GM12878 (cell line): ENCODE measurements at regions of chr6 and their contacts with region 1.

Region 1: DNA sequence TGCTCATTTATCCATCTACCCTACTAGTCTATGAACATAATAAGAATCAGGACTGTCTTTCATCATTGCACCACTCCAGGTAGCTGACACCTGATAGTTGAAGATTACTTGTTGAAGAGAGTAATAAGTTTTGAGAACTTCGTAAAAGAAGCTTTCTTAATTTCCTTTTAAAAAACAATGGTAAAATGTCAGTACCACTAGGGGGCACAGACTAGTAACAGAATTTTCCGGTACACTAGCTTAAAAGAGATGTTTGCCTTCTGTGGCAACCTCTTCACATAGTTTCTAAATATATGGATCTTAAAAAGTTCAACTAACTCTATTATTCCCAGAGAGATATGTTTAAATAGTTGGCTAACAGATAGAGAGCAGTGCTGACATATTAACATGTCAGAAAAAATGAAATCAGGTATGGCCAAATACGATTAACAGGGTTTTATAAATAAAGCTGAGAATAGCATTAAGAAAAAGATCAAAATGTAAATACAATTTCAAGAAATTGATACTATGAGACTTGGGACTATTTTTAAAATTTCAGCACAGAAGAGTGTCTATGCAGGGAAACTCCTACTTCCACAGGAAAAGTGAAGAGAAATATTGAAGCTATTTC is 5.4 kb upstream of the KCNQ5 start:
- DNase-seq: no peak
- ATAC-seq: no peak
- H3K4me3 ChIP-seq: no peak overlapping the region
- H3K27ac ChIP-seq: no peak overlapping the region
- H3K4me1 ChIP-seq: peaks cover 13% of the 10 kb centered on the region
- H3K27me3 ChIP-seq: no peaks in the 10 kb centered on the region
- CTCF ChIP-seq: peak; percentile 57 to 70 (median 60); a peak in 5 of 6 replicates
- EP300 ChIP-seq: no peak
- POLR2A ChIP-seq: no peak
- RAD21 ChIP-seq: peak; percentile 81

Region 2: GRCh38 chr6:72064399-72064975 is 552.0 kb before region 1 on chr6:
- CTCF ChIA-PET with region 1: no interaction called
- POLR2A ChIA-PET with region 1: no interaction called
- RAD21 ChIA-PET with region 1: no interaction called
- SMC1A ChIA-PET with region 1: no interaction called
- in situ Hi-C with region 1: no loop called
- intact Hi-C with region 1: no loop called
- DNase-seq: no peak
- ATAC-seq: no peak
- H3K4me3 ChIP-seq: no peak overlapping the region
- H3K27ac ChIP-seq: no peak overlapping the region
- H3K4me1 ChIP-seq: no peaks in the 10 kb centered on the region
- H3K27me3 ChIP-seq: 0 out of 4 replicates have a peak, but pooled peaks cover 0 to 2% of the 10 kb centered on the region in 2 experiments
- CTCF ChIP-seq: no peak
- EP300 ChIP-seq: no peak
- POLR2A ChIP-seq: no peak
- RAD21 ChIP-seq: no peak

Region 3: GRCh38 chr6:72418495-72418894 is 198.0 kb before region 1 on chr6:
- CTCF ChIA-PET with region 1: interaction called, 55 read pairs
- POLR2A ChIA-PET with region 1: no interaction called
- RAD21 ChIA-PET with region 1: interaction called, 6 read pairs
- SMC1A ChIA-PET with region 1: interaction called, 27 read pairs
- in situ Hi-C with region 1: no loop called
- intact Hi-C with region 1: loop called (anchors 2 kb)
- DNase-seq: no peak
- ATAC-seq: no peak
- H3K4me3 ChIP-seq: no peak overlapping the region
- H3K27ac ChIP-seq: no peak overlapping the region
- H3K4me1 ChIP-seq: no peaks in the 10 kb centered on the region
- H3K27me3 ChIP-seq: peaks cover 0 to 1% of the 10 kb centered on the region in 2 experiments; a peak in 1 of 4 replicates
- CTCF ChIP-seq: no peak
- EP300 ChIP-seq: no peak
- POLR2A ChIP-seq: no peak
- RAD21 ChIP-seq: no peak

Region 4: DNA sequence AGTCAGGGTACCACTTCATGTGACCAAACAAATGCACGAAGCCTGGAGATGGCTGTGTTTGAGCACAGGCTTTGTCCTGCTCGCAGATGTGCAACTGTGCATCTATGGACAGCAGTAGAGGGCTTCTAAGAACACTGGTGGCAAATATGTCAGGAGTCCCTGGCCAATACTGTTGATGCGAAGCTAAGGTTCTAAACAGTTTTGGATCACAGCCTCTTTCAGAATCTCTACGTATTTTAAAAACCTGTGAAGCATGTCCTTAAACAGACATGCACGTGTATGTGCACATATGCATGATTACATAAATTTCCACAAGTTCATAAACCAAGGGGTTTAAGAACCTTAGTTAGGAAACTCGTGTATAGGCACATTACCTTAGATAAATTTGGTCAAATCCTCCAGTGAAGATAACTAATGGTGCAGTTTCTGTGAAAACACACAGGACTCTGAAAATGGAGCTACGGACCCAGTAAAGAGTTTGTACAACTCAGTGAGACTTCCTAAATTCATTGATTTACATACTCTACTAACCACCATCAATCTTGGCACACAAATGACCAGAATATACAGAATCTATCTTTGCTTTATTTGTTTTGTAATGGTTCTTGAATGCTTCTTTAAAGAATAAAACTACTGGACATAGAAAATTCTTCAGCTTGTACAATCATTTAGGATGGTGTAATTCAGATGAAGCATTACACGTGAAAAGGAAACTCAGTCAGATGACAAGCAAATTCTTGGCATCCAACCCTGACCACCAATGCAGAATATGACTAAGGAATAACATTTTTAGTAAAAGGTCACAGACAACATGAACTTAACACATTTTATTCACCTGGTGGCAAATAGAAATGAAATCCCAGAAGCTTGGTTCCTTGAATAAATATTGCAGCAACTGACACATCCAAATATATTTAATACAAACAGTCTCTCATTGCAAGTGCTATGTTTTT is 32.8 kb after region 1 on chr6:
- CTCF ChIA-PET with region 1: interaction called, 13 read pairs
- POLR2A ChIA-PET with region 1: interaction called, 8 read pairs
- RAD21 ChIA-PET with region 1: interaction called, 24 read pairs
- SMC1A ChIA-PET with region 1: interaction called, 15 read pairs
- in situ Hi-C with region 1: no loop called
- intact Hi-C with region 1: no loop called
- DNase-seq: peak; percentile 58
- ATAC-seq: peak; percentile 71
- H3K4me3 ChIP-seq: peak overlapping the region; percentile 4; the same call in 1 of the 2 replicates
- H3K27ac ChIP-seq: peak overlapping the region; percentile 77
- H3K4me1 ChIP-seq: peaks cover 25% of the 10 kb centered on the region
- H3K27me3 ChIP-seq: no peaks in the 10 kb centered on the region
- CTCF ChIP-seq: no peak
- EP300 ChIP-seq: peak; percentile 66 to 82; a peak in 3 of 4 replicates
- POLR2A ChIP-seq: 0 out of 2 replicates have a peak, but pooled peaks have one; percentile 25
- RAD21 ChIP-seq: no peak

Region 5: GRCh38 chr6:72740135-72740534 is 123.6 kb after region 1 on chr6:
- CTCF ChIA-PET with region 1: interaction called, 9 read pairs
- POLR2A ChIA-PET with region 1: interaction called, 3 read pairs
- RAD21 ChIA-PET with region 1: interaction called, 10 read pairs
- SMC1A ChIA-PET with region 1: interaction called, 15 read pairs
- in situ Hi-C with region 1: no loop called
- intact Hi-C with region 1: loop called (anchors 5 kb)
- DNase-seq: peak; percentile 90
- ATAC-seq: peak; percentile 94
- H3K4me3 ChIP-seq: peak overlapping the region; percentile 50; the same call in 1 of the 2 replicates
- H3K27ac ChIP-seq: peak overlapping the region; percentile 82
- H3K4me1 ChIP-seq: peaks cover 24% of the 10 kb centered on the region
- H3K27me3 ChIP-seq: no peaks in the 10 kb centered on the region
- CTCF ChIP-seq: no peak
- EP300 ChIP-seq: peak; percentile 79 to 94
- POLR2A ChIP-seq: no peak
- RAD21 ChIP-seq: 0 out of 2 replicates have a peak, but pooled peaks have one; percentile 14

Region 6: GRCh38 chr6:73109659-73110058 is 493.1 kb after region 1 on chr6:
- CTCF ChIA-PET with region 1: interaction called, 33 read pairs
- POLR2A ChIA-PET with region 1: no interaction called
- RAD21 ChIA-PET with region 1: interaction called, 9 read pairs
- SMC1A ChIA-PET with region 1: interaction called, 10 read pairs
- in situ Hi-C with region 1: no loop called
- intact Hi-C with region 1: no loop called
- DNase-seq: no peak
- ATAC-seq: no peak
- H3K4me3 ChIP-seq: no peak overlapping the region
- H3K27ac ChIP-seq: no peak overlapping the region
- H3K4me1 ChIP-seq: no peaks in the 10 kb centered on the region
- H3K27me3 ChIP-seq: no peaks in the 10 kb centered on the region
- CTCF ChIP-seq: no peak
- EP300 ChIP-seq: no peak
- POLR2A ChIP-seq: no peak
- RAD21 ChIP-seq: no peak

Region 7: DNA sequence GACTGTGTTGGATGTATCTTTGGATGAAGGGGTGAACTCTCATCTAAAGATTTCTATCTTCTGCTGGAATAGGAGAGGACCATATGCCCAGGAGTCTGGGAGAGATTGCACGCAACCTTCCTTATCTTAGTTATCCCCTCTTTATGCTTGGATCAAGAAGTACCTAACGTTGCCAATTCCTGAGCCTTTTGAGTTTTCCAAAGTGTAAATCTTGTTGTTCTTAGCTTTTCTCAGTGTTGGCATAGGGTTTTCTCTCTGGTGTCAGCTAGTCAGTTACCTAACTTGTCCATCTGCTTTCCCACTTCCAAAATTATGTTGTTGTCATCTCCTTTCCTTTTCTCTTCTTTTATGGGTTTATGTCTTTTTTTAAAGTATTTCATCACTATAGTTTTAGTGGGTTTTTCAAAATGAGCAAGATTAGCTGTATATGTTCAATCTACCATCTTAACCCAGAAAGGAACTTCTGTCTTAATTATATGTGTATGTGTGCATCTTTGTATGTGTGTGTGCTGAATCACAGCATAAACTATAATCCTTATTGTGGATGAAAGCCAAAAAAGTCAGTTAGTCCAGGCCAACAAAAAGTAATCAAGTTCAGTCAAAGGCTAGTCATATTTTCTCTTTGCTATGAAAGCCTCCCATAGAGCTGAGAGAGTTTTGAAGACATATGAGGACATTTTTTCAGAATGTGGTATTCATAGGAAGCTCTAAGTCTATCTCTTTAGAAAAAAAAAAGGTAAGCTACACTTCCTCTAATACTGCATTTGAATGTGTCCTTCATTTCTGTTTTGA is 536.7 kb after region 1 on chr6:
- CTCF ChIA-PET with region 1: interaction called, 14 read pairs
- POLR2A ChIA-PET with region 1: interaction called, 3 read pairs
- RAD21 ChIA-PET with region 1: interaction called, 19 read pairs
- SMC1A ChIA-PET with region 1: interaction called, 5 read pairs
- in situ Hi-C with region 1: no loop called
- intact Hi-C with region 1: no loop called
- DNase-seq: no peak
- ATAC-seq: no peak
- H3K4me3 ChIP-seq: no peak overlapping the region
- H3K27ac ChIP-seq: no peak overlapping the region
- H3K4me1 ChIP-seq: peaks cover 4% of the 10 kb centered on the region; the same call in 1 of the 2 replicates
- H3K27me3 ChIP-seq: no peaks in the 10 kb centered on the region
- CTCF ChIP-seq: no peak
- EP300 ChIP-seq: no peak
- POLR2A ChIP-seq: no peak
- RAD21 ChIP-seq: no peak